Psoas muscle (tissue), 8 donors: ENCODE measurements at regions of chr3 and their contacts with region 1.

Region 1: DNA sequence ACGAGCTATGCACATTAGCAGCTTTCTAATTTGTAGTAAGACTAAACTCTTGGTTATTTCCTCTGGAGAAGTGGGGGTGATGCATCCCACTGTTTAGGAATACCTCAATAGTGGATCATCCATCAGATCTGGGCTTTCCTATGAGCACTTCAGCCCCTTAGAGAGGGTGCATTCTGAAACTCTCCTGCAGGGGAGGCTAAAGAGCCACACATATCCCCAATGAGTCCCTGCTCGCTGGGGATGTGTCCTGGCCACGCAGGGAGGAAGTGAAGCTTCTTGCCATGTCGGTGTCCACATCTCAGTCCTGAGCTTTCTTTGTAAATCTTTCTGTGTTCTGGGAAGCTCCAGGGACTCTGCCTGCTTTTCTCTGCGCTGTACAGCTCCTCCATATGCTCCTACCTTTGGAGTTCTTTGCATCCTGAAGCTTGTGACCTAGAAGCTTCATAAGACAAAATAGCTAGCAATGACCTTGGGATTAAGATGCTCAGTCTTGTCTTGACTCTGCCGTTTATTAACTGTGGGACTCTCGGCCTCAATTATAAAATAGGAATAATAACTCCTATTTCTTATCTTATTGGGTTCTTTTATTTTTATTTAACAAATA is 28.3 kb upstream of the MASP1 start:
- DNase-seq: peak; percentile 50 to 71
- ATAC-seq: peak; percentile 77 to 90 (median 84)
- H3K4me3 ChIP-seq: no peak overlapping the region
- H3K27ac ChIP-seq: no peak overlapping the region
- H3K4me1 ChIP-seq: peaks cover 9% of the 10 kb centered on the region
- H3K27me3 ChIP-seq: peaks cover 0 to 9% (median 0%) of the 10 kb centered on the region in 3 donors
- CTCF ChIP-seq: peak; percentile 84

Region 2: GRCh38 chr3:186953011-186953487 is 366.8 kb before region 1 on chr3:
- intact Hi-C with region 1: no loop called
- DNase-seq: no peak
- ATAC-seq: no peak
- H3K4me3 ChIP-seq: no peak overlapping the region
- H3K27ac ChIP-seq: no peak overlapping the region
- H3K4me1 ChIP-seq: peaks cover 14% of the 10 kb centered on the region
- H3K27me3 ChIP-seq: no peaks in the 10 kb centered on the region
- CTCF ChIP-seq: no peak

Region 3: DNA sequence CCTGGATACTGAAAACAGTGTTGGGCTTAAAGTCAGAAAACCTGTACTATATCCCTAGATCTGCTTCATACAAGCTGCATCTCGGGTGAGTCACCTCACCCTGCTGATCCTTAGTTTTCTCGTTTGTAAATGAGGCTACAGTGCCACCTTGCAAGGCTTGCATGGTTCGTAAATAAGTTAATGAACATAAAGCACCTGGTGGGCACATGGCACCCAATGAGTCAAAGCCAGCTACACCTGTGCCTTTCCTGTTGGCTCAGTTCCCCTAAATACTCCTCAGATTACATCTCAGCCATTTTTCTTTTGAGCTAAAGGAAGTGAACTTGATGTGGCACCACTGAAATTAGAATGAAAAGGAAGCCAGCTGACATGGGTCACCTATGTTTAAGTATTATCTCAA is 96.0 kb before region 1 on chr3:
- intact Hi-C with region 1: loop called in 1 of 2 experiments (anchors 1 kb)
- DNase-seq: no peak
- ATAC-seq: no peak
- H3K4me3 ChIP-seq: no peak overlapping the region
- H3K27ac ChIP-seq: no peak overlapping the region
- H3K4me1 ChIP-seq: no peaks in the 10 kb centered on the region
- H3K27me3 ChIP-seq: no peaks in the 10 kb centered on the region
- CTCF ChIP-seq: no peak

Region 4: DNA sequence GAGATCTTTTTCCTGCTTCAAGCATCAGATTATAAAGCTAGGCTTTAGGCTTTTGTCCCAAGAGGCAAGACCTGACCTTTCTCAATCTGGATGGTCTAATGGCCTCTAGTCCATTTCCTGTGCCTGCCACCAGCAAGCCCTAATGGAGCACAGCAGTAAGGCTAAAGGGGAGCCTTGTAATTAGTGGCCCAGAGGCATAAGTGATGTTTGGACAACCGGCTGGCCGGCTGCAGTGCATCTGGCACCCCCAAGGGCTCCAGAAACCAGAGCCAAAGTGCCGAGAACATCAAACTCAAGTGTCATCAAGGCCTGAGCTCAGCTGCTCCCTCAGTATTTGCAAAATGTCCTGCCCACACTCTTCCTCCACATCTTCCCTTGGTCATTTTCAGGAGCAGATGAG is 16.5 kb after region 1 on chr3:
- intact Hi-C with region 1: no loop called
- DNase-seq: no peak
- ATAC-seq: no peak
- H3K4me3 ChIP-seq: no peak overlapping the region
- H3K27ac ChIP-seq: no peak overlapping the region
- H3K4me1 ChIP-seq: no peaks in the 10 kb centered on the region
- H3K27me3 ChIP-seq: no peaks in the 10 kb centered on the region
- CTCF ChIP-seq: no peak

Region 5: DNA sequence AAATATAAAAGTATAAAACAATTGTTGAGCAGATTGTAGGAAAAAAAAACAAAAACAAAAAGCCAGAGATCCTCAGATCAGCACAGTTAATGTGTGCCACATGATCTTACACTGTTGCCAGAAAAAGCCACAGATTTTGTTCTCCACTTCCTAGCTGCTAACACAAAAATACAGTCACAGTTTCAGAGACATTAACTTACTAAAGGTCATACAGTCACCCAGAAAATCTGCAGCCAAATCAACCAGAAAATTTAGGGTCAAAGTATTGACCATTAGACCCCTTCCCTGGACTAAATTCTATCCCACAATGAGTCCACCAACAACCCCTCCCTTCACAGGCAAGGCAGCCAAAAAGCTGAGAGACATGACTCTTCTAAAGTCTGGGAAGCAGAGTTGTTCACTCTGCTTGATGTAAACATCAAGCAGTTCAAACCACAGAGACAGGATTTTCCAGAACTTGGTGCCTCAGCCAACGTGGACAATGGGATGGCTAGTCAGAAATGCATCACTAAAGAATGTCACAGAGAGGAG is 291.2 kb after region 1 on chr3:
- intact Hi-C with region 1: loop called (anchors 5 to 10 kb)
- DNase-seq: no peak
- ATAC-seq: no peak
- H3K4me3 ChIP-seq: no peak overlapping the region
- H3K27ac ChIP-seq: no peak overlapping the region
- H3K4me1 ChIP-seq: peaks cover 4% of the 10 kb centered on the region
- H3K27me3 ChIP-seq: peaks cover 0 to 4% (median 0%) of the 10 kb centered on the region in 3 donors
- CTCF ChIP-seq: no peak

Region 6: GRCh38 chr3:187616307-187616972 is 296.6 kb after region 1 on chr3:
- intact Hi-C with region 1: loop called (anchors 5 to 10 kb)
- DNase-seq: peak in 1 of 2 donors; percentile 51
- ATAC-seq: peak; percentile 44 to 82 (median 59)
- H3K4me3 ChIP-seq: no peak overlapping the region
- H3K27ac ChIP-seq: no peak overlapping the region
- H3K4me1 ChIP-seq: peaks cover 4% of the 10 kb centered on the region
- H3K27me3 ChIP-seq: no peaks in the 10 kb centered on the region
- CTCF ChIP-seq: peak; percentile 75

Region 7: DNA sequence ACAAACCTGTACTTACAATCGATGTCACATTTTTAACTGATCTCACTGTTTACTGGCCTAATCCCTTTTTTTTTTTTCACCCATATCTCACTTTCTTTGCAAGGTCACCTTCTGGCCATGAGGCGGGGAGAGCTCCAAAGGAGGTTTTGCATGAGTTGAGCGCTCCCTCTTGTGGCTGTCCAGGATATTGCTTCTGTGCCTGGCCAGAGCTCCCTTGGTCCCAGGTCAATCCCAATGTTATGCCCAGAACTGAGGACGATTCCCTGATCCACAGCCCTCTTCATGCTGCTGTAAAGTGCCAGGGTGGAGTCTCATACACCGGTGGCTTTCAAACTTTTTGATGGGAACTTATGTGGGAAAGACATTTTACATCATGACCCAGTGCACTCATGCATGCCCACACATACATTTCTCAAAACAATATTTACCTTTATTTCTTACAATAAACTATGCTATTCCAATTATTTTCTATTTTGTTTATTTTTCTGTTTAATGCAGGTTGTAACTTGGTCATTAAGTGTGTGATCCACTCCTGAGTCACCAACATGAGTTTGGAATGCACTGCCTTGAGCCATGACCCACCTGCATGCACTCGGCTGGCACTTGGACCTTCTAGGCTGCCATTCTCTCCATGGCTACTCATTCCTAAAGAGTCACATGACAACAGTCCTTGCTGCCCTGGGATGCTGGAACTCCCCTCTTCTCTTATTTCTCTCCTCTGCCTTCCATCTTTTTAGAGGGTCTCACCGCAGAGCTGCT is 360.0 kb after region 1 on chr3:
- intact Hi-C with region 1: loop called (anchors 1 to 2 kb)
- DNase-seq: peak; percentile 70 to 82
- ATAC-seq: peak; percentile 86 to 98 (median 90)
- H3K4me3 ChIP-seq: no peak overlapping the region
- H3K27ac ChIP-seq: no peak overlapping the region
- H3K4me1 ChIP-seq: no peaks in the 10 kb centered on the region
- H3K27me3 ChIP-seq: peaks cover 0 to 4% (median 2%) of the 10 kb centered on the region in 3 donors
- CTCF ChIP-seq: peak; percentile 95

Region 8: DNA sequence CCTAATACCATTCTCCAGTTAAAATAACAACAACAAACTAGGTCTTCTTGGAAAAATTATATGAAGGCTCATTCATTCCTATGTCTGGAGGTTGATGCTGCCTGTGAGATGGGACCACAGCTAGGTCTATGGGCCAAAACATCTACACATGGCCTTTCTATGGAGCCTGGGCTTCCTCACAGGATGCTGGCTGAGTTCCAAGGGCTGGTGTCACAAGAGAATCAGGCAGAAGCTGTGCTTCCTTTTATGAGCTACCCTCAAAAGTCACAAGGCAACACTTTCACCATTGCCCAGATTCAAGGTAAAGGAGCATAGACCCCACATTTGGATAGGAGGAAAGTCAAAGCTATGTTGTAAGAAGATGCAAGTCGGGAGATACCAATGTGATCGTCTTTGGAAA is 387.2 kb after region 1 on chr3:
- intact Hi-C with region 1: loop called in 1 of 2 experiments (anchors 2 kb)
- DNase-seq: no peak
- ATAC-seq: no peak
- H3K4me3 ChIP-seq: no peak overlapping the region
- H3K27ac ChIP-seq: no peak overlapping the region
- H3K4me1 ChIP-seq: peaks cover 30% of the 10 kb centered on the region
- H3K27me3 ChIP-seq: no peaks in the 10 kb centered on the region
- CTCF ChIP-seq: no peak

Region 9: DNA sequence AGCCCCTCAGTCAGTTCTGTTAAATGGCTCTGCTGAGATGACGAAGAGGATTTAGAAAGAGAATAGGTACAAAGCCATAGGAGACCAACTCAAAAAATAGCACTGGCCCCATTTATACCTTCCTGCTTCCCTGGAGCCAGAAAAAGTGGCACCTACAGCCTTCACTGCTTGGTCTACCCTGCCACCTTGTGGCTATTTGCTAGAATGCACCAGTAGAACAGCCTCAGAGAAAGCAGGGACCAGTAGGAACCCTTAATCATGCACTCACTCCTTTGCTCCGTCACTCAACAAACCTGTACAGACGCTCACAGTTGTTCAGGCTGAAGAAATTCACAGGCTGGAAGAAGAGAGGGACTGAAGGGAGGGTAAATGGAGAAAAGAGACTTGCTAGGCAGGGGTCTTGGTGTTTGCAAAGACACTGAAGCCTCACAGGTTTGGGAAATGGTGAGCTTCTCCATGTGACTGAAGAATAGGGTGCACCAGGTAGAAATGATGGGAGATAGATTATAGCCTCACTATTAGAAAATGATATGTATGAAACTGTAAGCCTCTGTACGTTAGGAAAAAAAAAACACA is 394.7 kb after region 1 on chr3:
- intact Hi-C with region 1: loop called (anchors 1 to 2 kb)
- DNase-seq: no peak
- ATAC-seq: peak; percentile 79 to 86 (median 80)
- H3K4me3 ChIP-seq: no peak overlapping the region
- H3K27ac ChIP-seq: no peak overlapping the region
- H3K4me1 ChIP-seq: peaks cover 17% of the 10 kb centered on the region
- H3K27me3 ChIP-seq: no peaks in the 10 kb centered on the region
- CTCF ChIP-seq: peak; percentile 98